Activated T-helper 1 cell treated with anti-CD3 and anti-CD28 coated beads, Interleukin-12 subunit alpha, Interleukin-12 subunit beta, Interleukin-2, Interleukin-4 antibody, amounts not matched to agents 30 ng/mL and 10 ng/mL and 1 ng/mL, durations not matched to agents 14 hours and 24 hours and 36 hours (primary cell): ENCODE measurements at regions of chr13 and their contacts with region 1.

Region 1: GRCh38 chr13:51452361-51453206 is at the start of gene INTS6:
- DNase-seq: peak; percentile 99
- H3K4me3 Mint-ChIP-seq: peak within 1 kb of the TSS; percentile 92
- H3K27ac Mint-ChIP-seq: peak within 1 kb of the TSS; percentile 98
- H3K4me1 Mint-ChIP-seq: peaks cover 52% of the 10 kb centered on the region
- H3K27me3 Mint-ChIP-seq: no peaks in the 10 kb centered on the region
- total RNA-seq, gene INTS6: 76.6 and 81.7 TPM in 2 replicates

Region 2: GRCh38 chr13:51425410-51426042 is 27.1 kb before region 1 on chr13:
- intact Hi-C with region 1: loop called (anchors 1 kb)
- DNase-seq: no peak
- H3K4me3 Mint-ChIP-seq: no peak overlapping the region
- H3K27ac Mint-ChIP-seq: no peak overlapping the region
- H3K4me1 Mint-ChIP-seq: peaks cover 64% of the 10 kb centered on the region
- H3K27me3 Mint-ChIP-seq: no peaks in the 10 kb centered on the region

Region 3: DNA sequence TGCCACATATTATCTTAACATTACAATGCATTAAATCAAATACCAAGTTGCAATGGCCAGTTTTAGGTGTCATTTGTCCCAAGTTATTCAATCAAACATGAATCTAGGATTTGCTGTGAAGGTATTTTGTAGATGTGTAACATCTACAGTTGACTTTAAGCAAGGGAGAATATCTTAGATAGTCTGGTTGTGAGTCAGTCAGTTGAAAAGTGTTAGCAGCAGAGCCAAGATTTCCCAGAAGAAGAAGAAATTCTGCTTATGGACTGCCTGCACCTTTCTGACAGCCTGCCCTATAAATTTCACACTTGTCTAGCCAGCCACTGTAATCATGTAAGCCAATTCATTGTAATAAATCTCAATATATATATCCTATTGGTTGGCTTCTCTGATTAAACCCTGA is 41.6 kb after region 1 on chr13:
- intact Hi-C with region 1: no loop called
- DNase-seq: no peak
- H3K4me3 Mint-ChIP-seq: no peak overlapping the region
- H3K27ac Mint-ChIP-seq: no peak overlapping the region
- H3K4me1 Mint-ChIP-seq: no peaks in the 10 kb centered on the region
- H3K27me3 Mint-ChIP-seq: peaks cover 12% of the 10 kb centered on the region

Region 4: GRCh38 chr13:51534041-51534817 is 81.6 kb after region 1 on chr13:
- intact Hi-C with region 1: loop called (anchors 5 kb)
- DNase-seq: peak; percentile 46
- H3K4me3 Mint-ChIP-seq: peak overlapping the region; percentile 26
- H3K27ac Mint-ChIP-seq: peak overlapping the region; percentile 70
- H3K4me1 Mint-ChIP-seq: peaks cover 50% of the 10 kb centered on the region
- H3K27me3 Mint-ChIP-seq: no peaks in the 10 kb centered on the region

Region 5: DNA sequence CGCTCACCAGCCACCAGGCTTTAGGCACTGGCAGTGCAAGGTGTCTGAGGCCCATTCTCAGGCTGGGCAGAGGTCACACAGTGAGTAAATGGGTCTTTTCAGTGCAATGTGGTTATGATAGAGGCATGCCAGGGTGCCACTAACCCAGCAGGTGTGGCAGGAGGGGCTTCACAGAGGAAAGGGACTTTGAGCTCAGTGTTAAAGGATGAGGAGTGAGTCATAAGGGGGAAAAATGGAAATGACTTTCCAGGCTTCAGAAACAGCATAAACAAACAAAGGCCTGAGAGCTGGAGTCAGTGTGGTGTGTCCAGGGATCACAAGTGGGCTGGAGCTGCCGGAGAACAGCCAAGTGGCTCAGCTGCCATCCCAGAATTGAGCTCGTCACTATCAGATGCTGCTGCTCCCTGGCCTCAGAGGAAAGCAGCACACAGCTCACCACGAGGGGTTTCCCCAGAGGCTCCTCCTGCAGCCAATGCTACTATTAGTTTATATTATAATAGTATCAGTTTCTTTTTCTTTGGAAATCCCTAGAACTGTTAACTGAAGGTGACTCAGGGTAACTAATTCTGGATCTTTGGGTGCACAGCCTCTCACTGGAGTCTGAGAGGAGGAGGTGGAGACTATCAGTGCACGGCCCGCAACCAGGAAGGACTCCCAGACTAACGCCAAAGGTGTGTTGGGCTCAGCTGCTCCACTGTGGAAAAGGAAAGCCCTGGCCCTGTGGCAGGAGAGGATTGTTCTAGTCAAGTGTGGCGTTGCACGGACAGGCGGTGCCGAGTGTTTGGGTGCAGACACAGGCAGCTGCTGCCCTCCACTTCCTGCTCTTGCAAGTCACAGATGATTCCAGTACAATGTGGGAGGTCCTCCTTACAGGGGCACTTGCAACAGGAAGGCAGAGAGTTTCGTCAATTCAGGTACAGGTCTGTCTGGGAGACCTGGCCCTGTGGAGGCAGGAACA is 311.9 kb after region 1 on chr13:
- intact Hi-C with region 1: loop called (anchors 1 kb)
- DNase-seq: peak; percentile 43
- H3K4me3 Mint-ChIP-seq: peak overlapping the region; percentile 79
- H3K27ac Mint-ChIP-seq: peak overlapping the region; percentile 96
- H3K4me1 Mint-ChIP-seq: peaks cover 41% of the 10 kb centered on the region
- H3K27me3 Mint-ChIP-seq: no peaks in the 10 kb centered on the region

Region 6: GRCh38 chr13:52011632-52012511 is 559.3 kb after region 1 on chr13 and contains the start of gene ALG11:
- intact Hi-C with region 1: loop called (anchors 1 kb)
- DNase-seq: peak; percentile 100
- H3K4me3 Mint-ChIP-seq: peak within 1 kb of the TSS; percentile 99
- H3K27ac Mint-ChIP-seq: peak within 1 kb of the TSS; percentile 88
- H3K4me1 Mint-ChIP-seq: peaks cover 13% of the 10 kb centered on the region
- H3K27me3 Mint-ChIP-seq: peaks cover 34% of the 10 kb centered on the region
- total RNA-seq, gene ALG11: 24.7 and 28.6 TPM in 2 replicates

Region 7: GRCh38 chr13:52194184-52194868 is 741.7 kb after region 1 on chr13:
- intact Hi-C with region 1: loop called (anchors 2 kb)
- DNase-seq: peak; percentile 85
- H3K4me3 Mint-ChIP-seq: peak overlapping the region; percentile 95
- H3K27ac Mint-ChIP-seq: peak overlapping the region; percentile 95
- H3K4me1 Mint-ChIP-seq: peaks cover 20% of the 10 kb centered on the region
- H3K27me3 Mint-ChIP-seq: no peaks in the 10 kb centered on the region